CD8-positive, alpha-beta memory T cell (primary cell): ENCODE measurements at regions of chr12 and their contacts with region 1.

Region 1: DNA sequence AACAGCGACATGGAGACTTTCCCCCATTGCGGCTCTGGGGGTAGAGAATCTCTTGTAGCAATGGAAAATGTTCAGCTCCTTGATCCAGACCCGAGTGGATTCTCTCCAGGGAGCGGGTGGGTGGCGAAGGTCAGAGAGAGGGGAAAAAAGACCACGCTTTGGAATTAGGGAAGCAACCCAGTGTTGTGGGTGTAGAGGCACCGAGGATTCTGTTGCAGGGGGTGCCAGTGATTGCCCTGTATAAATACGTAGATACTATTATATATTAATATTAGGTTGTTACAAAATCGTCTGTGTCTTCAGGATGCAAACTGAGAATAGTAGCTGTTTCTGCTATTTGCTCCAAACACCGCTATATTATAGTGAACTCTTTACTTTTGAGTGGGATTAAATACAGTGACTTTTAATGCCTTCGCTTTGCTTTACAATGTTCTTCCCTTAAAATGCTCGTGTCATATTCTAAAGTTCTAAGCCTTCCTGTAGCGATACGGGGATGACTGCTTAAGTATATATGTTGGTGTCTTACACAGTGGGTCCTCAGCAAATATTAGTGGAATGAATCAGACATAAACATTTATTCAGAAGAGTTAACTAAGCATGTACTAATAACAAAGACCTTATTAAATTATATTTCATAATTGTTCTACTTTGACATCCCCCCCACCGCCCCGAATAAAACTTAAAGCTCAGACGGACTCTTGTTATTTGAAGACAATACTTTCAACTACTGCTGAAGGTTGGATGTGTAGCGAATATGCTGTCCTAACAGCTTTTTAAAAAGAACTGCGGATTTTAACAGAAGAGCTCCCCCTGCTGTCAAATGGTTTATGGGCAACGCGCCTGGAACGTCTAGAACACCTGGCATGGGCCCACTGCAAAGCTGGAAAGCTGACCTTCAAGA is 136.4 kb upstream of the KRAS start:
- DNase-seq: peak; percentile 53 to 83 (median 80)
- H3K4me3 ChIP-seq: peak overlapping the region; percentile 95
- H3K4me3 Mint-ChIP-seq: peak overlapping the region; percentile 88 to 99 (median 97)
- H3K27ac ChIP-seq: peak overlapping the region; percentile 100
- H3K27ac Mint-ChIP-seq: peak overlapping the region; percentile 99 to 100 (median 100)
- H3K4me1 ChIP-seq: peaks cover 34% of the 10 kb centered on the region
- H3K4me1 Mint-ChIP-seq: peaks cover 32 to 56% (median 49%) of the 10 kb centered on the region in 3 donors
- H3K27me3 ChIP-seq: no peaks in the 10 kb centered on the region
- H3K27me3 Mint-ChIP-seq: peaks cover 0 to 8% of the 10 kb centered on the region in 2 donors

Region 2: DNA sequence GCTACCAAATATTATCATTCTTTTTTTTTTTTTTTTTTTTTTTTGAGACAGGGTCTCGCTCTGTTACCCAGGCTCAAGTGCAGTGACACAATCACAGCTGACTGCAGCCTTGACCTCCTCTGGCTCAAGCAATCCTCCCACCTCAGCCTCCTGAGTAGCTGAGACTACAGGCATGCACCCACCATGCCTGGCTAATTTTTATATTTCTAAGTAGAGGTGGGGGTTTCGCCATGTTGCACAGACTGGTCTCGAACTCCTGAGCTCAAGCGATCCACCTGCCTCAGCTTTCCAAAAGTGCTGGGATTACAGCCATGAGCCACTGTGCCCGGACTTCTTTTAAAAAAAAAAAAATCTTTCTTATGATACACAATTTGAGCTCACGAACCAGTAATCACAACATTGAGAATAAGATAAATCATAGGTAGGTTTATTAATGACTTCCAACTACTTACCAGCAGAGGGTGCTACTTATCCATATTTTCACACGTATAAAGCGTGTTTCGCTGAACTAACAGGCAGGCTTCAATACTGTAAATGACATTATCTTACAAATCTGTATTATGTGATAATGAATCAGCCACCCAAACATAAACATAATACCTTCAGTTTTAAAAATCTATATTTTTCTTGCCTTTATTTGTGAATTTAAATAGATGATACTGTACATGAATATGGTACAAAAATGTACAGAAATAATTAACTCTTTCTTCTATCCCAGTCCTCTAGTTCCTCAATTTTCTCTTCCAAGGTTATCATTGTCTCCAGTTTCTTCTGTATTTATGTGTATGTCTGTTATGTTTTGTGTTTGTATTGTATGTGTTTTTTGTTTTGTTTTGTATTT is 395.7 kb before region 1 on chr12:
- CTCF ChIA-PET with region 1: interaction called, 15 read pairs
- POLR2A ChIA-PET with region 1: no interaction called
- DNase-seq: peak in 2 of 5 donors; percentile 55 to 59
- H3K4me3 ChIP-seq: no peak overlapping the region
- H3K4me3 Mint-ChIP-seq: no peak overlapping the region
- H3K27ac ChIP-seq: no peak overlapping the region
- H3K27ac Mint-ChIP-seq: no peak overlapping the region
- H3K4me1 ChIP-seq: no peaks in the 10 kb centered on the region
- H3K4me1 Mint-ChIP-seq: no peaks in the 10 kb centered on the region
- H3K27me3 ChIP-seq: no peaks in the 10 kb centered on the region
- H3K27me3 Mint-ChIP-seq: peaks cover 1 to 8% of the 10 kb centered on the region in 2 donors

Region 3: DNA sequence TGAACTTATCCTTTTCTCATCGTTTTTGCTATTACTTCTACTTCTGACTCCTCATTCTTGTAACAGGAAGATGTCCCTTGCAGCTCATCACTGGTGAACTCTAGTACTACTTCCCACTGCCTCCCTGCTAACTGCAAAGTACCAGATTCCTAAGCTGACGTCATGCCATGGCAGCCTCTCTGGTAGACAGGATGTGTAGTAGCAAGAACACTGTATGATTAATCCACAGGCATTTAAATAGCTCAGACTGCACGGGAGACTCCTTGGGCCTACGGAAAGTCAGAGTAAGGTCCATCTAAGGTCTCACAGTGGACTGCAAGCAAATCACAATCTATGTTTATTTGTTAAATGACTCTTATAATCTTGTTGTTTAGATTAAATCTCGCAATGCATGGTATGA is 235.6 kb before region 1 on chr12:
- CTCF ChIA-PET with region 1: interaction called, 10 read pairs
- POLR2A ChIA-PET with region 1: interaction called, 4 read pairs
- DNase-seq: no peak
- H3K4me3 ChIP-seq: no peak overlapping the region
- H3K4me3 Mint-ChIP-seq: no peak overlapping the region
- H3K27ac ChIP-seq: no peak overlapping the region
- H3K27ac Mint-ChIP-seq: peak overlapping the region in 1 of 8 donors; percentile 1
- H3K4me1 ChIP-seq: no peaks in the 10 kb centered on the region
- H3K4me1 Mint-ChIP-seq: peaks cover 6 to 11% (median 9%) of the 10 kb centered on the region in 3 donors
- H3K27me3 ChIP-seq: no peaks in the 10 kb centered on the region
- H3K27me3 Mint-ChIP-seq: no peaks in the 10 kb centered on the region

Region 4: DNA sequence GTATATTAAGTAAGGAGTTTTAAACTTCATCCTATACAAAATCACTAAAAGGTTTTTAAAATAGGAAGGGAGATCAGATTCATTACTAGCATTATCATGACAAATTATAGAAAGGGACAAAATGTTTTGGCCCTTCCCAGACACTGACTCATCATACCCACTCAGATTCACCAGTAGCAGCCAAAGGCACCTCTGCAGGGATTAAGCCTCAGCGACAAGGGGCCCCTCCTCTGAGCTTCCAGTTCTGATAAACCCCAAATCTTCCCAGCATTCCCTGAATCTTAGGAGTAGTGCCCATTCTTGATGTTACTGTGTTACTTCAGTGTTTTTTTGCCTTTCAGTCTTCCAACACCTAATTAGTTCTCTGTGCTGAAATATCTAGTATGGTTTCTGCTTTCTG is 150.9 kb before region 1 on chr12:
- CTCF ChIA-PET with region 1: interaction called, 23 read pairs
- POLR2A ChIA-PET with region 1: interaction called, 3 read pairs
- DNase-seq: no peak
- H3K4me3 ChIP-seq: no peak overlapping the region
- H3K4me3 Mint-ChIP-seq: no peak overlapping the region
- H3K27ac ChIP-seq: no peak overlapping the region
- H3K27ac Mint-ChIP-seq: peak overlapping the region in 6 of 8 donors; percentile 13 to 90 (median 36)
- H3K4me1 ChIP-seq: peaks cover 6% of the 10 kb centered on the region
- H3K4me1 Mint-ChIP-seq: peaks cover 14 to 68% (median 60%) of the 10 kb centered on the region in 3 donors
- H3K27me3 ChIP-seq: no peaks in the 10 kb centered on the region
- H3K27me3 Mint-ChIP-seq: no peaks in the 10 kb centered on the region

Region 5: DNA sequence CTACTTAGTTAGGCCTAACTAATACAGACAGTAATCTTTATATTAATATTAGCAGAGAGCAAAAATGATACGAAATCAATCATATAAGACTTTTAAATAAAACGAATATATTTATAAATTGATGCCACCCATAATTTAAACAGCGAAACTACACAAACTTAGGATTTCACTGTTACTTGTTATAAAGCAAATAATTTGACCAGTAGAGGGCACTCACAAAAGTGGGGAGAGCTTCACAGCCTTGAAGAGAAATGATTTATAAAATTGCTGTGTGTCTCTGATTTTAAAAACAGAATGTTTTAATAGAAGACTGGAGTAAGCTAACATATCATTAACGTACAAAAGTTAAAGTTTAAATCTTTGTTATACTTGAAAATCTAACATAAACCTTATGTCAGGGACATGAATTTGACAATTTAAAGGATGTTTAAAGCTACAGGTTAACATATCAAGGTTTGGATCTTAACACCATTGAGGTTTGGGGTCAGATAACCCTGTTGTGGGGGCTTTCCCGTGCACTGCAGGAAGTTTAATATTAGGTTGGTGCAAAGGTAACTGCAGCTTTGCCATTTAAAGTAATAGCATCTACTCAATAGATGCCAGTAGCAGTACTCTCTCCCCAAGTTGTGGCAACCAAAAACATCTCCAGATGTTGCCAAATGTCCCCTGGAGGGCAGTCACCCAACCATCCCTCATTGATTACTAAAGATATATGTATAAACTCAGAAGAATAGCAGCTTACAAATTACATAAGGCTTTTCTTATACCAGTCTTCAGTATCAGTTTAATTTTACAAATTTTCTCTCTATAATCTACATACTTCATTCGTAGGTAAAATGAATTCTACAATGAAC is 145.7 kb before region 1 on chr12:
- CTCF ChIA-PET with region 1: interaction called, 23 read pairs
- POLR2A ChIA-PET with region 1: interaction called, 3 read pairs
- DNase-seq: peak; percentile 22 to 77 (median 69)
- H3K4me3 ChIP-seq: no peak overlapping the region
- H3K4me3 Mint-ChIP-seq: peak overlapping the region in 3 of 7 donors; percentile 14 to 34 (median 34)
- H3K27ac ChIP-seq: no peak overlapping the region
- H3K27ac Mint-ChIP-seq: peak overlapping the region; percentile 52 to 96 (median 86)
- H3K4me1 ChIP-seq: peaks cover 10% of the 10 kb centered on the region
- H3K4me1 Mint-ChIP-seq: peaks cover 33 to 90% (median 79%) of the 10 kb centered on the region in 3 donors
- H3K27me3 ChIP-seq: no peaks in the 10 kb centered on the region
- H3K27me3 Mint-ChIP-seq: no peaks in the 10 kb centered on the region

Region 6: GRCh38 chr12:25404955-25405354 is 17.9 kb after region 1 on chr12:
- CTCF ChIA-PET with region 1: no interaction called
- POLR2A ChIA-PET with region 1: no interaction called
- DNase-seq: no peak
- H3K4me3 ChIP-seq: no peak overlapping the region
- H3K4me3 Mint-ChIP-seq: no peak overlapping the region
- H3K27ac ChIP-seq: no peak overlapping the region
- H3K27ac Mint-ChIP-seq: no peak overlapping the region
- H3K4me1 ChIP-seq: no peaks in the 10 kb centered on the region
- H3K4me1 Mint-ChIP-seq: no peaks in the 10 kb centered on the region
- H3K27me3 ChIP-seq: no peaks in the 10 kb centered on the region
- H3K27me3 Mint-ChIP-seq: peaks cover 0 to 4% of the 10 kb centered on the region in 2 donors